PC-9 (cell line): ENCODE measurements at regions of chrX and their contacts with region 1.

Region 1: DNA sequence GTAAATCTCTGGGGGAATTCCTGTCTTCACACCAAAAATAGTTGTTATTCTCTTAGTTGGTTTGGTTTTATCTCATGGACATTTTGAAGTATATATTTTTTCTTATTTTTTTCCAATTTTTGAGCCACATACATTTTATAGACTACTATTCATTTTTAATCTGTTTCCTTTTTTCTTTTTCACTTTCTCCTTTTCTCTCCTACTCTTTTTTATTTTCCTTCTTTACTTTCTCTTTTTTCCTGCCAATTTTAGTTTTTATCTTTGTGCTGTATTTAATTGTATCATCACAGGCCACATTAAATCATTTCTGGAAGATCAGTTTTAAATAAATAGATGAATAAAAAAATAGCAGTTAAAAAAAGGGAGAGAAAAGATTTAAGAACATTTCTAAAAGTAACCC is 14.0 kb upstream of the JADE3 start:
- DNase-seq: no peak
- H3K4me3 ChIP-seq: no peak overlapping the region
- H3K27ac ChIP-seq: no peak overlapping the region
- H3K4me1 ChIP-seq: no peaks in the 10 kb centered on the region
- H3K27me3 ChIP-seq: no peaks in the 10 kb centered on the region
- CTCF ChIP-seq: no peak

Region 2: DNA sequence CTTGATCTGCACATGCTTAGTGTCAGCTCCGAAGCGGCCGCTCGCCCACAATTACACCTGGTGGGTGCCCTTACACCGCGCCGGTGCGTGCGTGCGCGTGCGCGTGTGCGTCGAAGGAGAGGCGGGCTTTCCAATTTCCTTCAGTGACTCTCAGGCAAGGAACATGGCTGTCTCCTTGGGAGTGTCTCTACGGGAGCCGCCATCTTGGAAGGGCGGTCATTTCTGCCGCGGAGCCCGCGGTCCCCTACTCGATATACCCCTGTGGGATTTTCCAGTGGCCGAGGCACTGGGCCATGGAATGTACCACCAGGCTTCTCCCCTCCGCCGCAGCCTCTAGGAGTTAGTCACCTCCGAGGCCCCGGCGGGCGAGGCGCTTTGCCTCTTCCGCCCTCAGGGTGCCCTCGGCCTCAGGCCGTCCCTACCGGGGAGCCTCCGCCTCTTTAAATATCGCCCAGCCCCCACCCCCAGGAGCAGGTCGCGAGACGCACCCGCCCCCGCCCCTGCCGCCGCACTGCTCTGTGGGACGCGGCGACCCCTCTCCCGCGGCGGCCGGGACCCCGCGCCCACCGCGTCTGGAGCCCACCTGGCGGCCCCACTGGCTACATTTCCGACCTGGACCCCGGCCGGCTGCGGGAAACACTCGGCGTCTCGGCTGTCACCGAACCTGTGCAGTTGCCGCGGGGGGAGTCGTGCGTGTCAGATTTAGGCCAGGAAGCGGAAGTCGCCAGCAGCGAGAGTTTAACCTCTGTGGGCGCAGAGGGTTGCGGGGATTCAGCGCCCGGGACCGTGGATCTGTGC is 584.5 kb after region 1 on chrX and contains the start of gene ZNF41:
- CTCF ChIA-PET with region 1: no interaction called
- POLR2A ChIA-PET with region 1: interaction called, 11 read pairs
- intact Hi-C with region 1: no loop called
- DNase-seq: peak; percentile 69 to 71
- H3K4me3 ChIP-seq: peak within 1 kb of the TSS; percentile 57
- H3K27ac ChIP-seq: peak within 1 kb of the TSS; percentile 71
- H3K4me1 ChIP-seq: no peaks in the 10 kb centered on the region
- H3K27me3 ChIP-seq: no peaks in the 10 kb centered on the region
- CTCF ChIP-seq: no peak
- total RNA-seq, gene ZNF41: 1.8 and 3.1 TPM in 2 replicates